ENCODE measurements at regions of chr19 and their contacts with region 1.

Region 1: GRCh38 chr19:47529018-47529742 is 14.3 kb upstream of the NAPA start:
- DNase-seq: no peak
- H3K4me3 ChIP-seq: no peak overlapping the region
- H3K27ac ChIP-seq: no peak overlapping the region
- H3K4me1 ChIP-seq: no peaks in the 10 kb centered on the region
- H3K27me3 ChIP-seq: no peaks in the 10 kb centered on the region
- CTCF ChIP-seq: no peak
- POLR2A ChIP-seq: no peak

Region 2: GRCh38 chr19:47414469-47414868 is 114.7 kb before region 1 on chr19:
- intact Hi-C with region 1: no loop called
- DNase-seq: no peak
- H3K4me3 ChIP-seq: no peak overlapping the region
- H3K27ac ChIP-seq: no peak overlapping the region
- H3K4me1 ChIP-seq: no peaks in the 10 kb centered on the region
- H3K27me3 ChIP-seq: peaks cover 2 to 6% of the 10 kb centered on the region in 2 donors
- CTCF ChIP-seq: no peak
- POLR2A ChIP-seq: no peak

Region 3: DNA sequence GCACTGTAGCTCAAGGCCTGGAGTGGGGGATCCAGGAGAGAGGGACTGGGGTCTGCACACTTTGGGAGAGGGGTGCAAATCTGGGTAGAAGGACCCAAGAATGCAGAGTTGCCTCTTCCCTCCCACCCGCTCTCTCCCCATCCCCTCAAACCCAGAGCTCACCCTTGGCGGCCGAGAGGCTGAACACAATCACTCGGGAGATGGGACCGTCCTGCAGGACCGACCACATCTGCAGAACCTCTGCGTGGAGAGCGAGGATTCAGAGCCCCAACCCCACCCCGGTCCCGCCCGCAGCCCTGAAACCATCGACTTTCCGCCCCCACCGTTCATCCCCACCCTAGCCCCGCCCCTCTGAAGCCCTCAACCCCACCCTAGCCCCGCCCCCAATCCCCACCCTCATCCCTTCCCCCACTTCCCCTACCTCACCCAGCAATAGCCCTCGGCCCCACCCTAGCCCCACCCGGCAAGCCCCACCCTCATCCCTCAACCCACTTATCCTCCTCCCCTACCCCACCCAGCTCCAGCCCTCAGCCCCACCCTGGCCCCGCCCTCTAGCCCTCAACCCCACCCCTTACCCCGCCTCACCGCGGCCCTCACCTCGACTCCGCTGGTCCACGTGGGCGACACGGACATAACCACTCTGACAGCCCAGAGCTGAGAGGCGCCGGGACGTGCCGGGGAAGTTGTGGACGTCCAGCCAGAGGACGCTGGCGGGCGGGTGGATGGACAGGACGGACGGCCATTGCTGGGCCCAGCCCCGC is 49.3 kb before region 1 on chr19:
- intact Hi-C with region 1: no loop called
- DNase-seq: no peak
- H3K4me3 ChIP-seq: peak overlapping the region in 2 of 3 donors; percentile 7 to 27
- H3K27ac ChIP-seq: no peak overlapping the region
- H3K4me1 ChIP-seq: peaks cover 0 to 7% of the 10 kb centered on the region in 2 donors
- H3K27me3 ChIP-seq: no peaks in the 10 kb centered on the region
- CTCF ChIP-seq: no peak
- POLR2A ChIP-seq: no peak

Region 4: GRCh38 chr19:48755084-48755641 is 1226.0 kb after region 1 on chr19 and contains the start of gene FGF21:
- intact Hi-C with region 1: loop called (anchors 5 kb)
- DNase-seq: no peak
- H3K4me3 ChIP-seq: no peak within 1 kb of the TSS
- H3K27ac ChIP-seq: no peak within 1 kb of the TSS
- H3K4me1 ChIP-seq: no peaks in the 10 kb centered on the region
- H3K27me3 ChIP-seq: no peaks in the 10 kb centered on the region
- CTCF ChIP-seq: no peak
- POLR2A ChIP-seq: no peak
- total RNA-seq, gene FGF21: not detected

Measured in breast epithelium (tissue), 4 donors.